ENCODE measurements at regions of chr3 and their contacts with region 1.

Region 1: DNA sequence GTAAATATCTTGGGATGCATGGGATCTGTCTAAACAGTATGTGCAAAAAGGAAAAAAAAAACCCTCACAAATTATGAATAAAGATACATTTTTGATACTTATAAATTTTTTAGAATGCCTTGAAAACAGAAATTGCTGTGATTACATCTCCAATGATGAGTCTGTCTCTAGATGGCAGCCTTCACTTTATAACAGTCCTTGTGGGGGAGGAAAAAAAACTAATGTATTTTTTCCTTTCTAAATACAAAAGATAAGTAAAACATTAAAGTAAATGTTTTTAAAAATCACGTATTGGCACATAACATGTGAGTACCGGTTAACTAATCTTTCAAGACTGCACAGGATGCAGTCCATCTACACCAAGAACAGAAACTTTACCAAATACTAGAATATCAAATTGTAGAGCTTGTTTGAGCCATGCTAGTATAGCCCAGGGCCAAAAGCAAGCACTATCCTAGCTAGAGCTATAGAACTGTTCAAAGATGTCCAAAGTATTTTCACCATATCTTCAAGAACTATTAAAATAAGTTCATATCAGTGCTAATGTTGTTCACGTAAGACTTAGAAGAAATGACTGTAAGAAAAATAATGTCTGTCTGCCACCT is 206.4 kb downstream of the STAG1 start:
- DNase-seq: no peak
- H3K4me3 ChIP-seq: no peak overlapping the region
- H3K4me3 Mint-ChIP-seq: no peak overlapping the region
- H3K27ac ChIP-seq: no peak overlapping the region
- H3K27ac Mint-ChIP-seq: peak overlapping the region in 1 of 8 donors; percentile 73
- H3K4me1 ChIP-seq: no peaks in the 10 kb centered on the region
- H3K4me1 Mint-ChIP-seq: peaks cover 28 to 50% (median 46%) of the 10 kb centered on the region in 3 donors
- H3K27me3 ChIP-seq: no peaks in the 10 kb centered on the region
- H3K27me3 Mint-ChIP-seq: no peaks in the 10 kb centered on the region

Region 2: DNA sequence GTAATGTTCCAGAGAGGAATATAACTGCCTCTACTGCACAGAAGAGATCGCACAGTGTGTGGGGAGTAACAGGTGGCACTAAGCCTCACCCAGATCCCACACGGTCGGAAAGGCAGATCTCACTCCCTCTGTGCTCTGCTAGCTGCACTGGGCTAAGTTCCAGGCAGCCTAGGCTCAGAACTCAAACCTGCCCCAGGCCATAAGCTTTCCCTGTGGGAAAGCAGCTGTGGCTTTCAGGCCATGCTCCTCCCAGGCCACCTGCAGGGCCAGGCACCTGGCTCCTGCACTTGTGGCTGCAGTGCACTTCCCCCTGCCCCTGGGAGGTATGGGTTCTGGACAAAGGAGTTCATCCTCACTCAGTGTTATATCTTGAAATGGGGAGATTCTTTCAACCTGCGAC is 268.1 kb before region 1 on chr3:
- CTCF ChIA-PET with region 1: no interaction called
- POLR2A ChIA-PET with region 1: interaction called, 13 read pairs
- DNase-seq: no peak
- H3K4me3 ChIP-seq: no peak overlapping the region
- H3K4me3 Mint-ChIP-seq: no peak overlapping the region
- H3K27ac ChIP-seq: no peak overlapping the region
- H3K27ac Mint-ChIP-seq: no peak overlapping the region
- H3K4me1 ChIP-seq: no peaks in the 10 kb centered on the region
- H3K4me1 Mint-ChIP-seq: peaks cover 10 to 40% (median 20%) of the 10 kb centered on the region in 3 donors
- H3K27me3 ChIP-seq: no peaks in the 10 kb centered on the region
- H3K27me3 Mint-ChIP-seq: no peaks in the 10 kb centered on the region

Region 3: DNA sequence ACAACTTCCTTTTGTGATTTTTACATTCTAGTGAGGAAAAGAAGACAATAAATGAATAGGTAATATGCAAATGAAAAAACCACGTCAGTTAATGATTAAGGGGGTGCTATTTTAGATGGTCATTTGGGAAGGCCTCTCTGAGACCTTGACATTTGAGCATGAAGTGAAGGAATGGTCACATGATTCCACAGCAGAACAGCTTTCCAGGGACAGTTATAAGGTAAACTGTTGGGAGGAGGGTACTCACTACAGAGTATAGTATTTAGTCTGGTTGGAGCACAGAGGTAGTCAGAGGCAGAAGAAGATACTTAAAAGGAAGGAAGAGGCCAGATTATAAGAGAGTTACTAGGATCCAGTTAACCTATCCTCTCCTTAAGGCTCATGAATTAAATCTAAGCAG is 40.1 kb before region 1 on chr3:
- CTCF ChIA-PET with region 1: no interaction called
- POLR2A ChIA-PET with region 1: no interaction called
- DNase-seq: no peak
- H3K4me3 ChIP-seq: no peak overlapping the region
- H3K4me3 Mint-ChIP-seq: no peak overlapping the region
- H3K27ac ChIP-seq: no peak overlapping the region
- H3K27ac Mint-ChIP-seq: peak overlapping the region in 3 of 8 donors; percentile 1 to 54 (median 48)
- H3K4me1 ChIP-seq: no peaks in the 10 kb centered on the region
- H3K4me1 Mint-ChIP-seq: peaks cover 0 to 8% (median 6%) of the 10 kb centered on the region in 3 donors
- H3K27me3 ChIP-seq: no peaks in the 10 kb centered on the region
- H3K27me3 Mint-ChIP-seq: no peaks in the 10 kb centered on the region

Region 4: DNA sequence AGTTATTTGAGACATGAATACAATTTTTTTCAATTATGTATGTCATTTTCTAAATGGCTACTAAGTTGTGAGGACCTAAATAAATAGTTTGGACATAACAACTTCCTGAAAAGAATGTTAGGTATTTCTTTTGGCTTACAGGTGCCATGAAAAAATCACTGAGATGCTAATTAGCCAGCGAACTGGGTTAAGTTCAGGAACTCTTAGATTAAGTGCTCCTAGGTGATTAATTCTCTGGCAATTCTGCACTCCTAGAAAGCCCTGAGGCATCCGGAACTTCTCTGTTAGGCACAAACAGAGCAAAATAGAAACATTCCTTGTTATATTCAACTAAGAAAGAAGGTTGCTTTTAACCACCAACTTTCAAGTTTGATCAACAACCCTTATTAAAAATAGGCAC is 14.1 kb after region 1 on chr3:
- CTCF ChIA-PET with region 1: no interaction called
- POLR2A ChIA-PET with region 1: no interaction called
- DNase-seq: no peak
- H3K4me3 ChIP-seq: no peak overlapping the region
- H3K4me3 Mint-ChIP-seq: no peak overlapping the region
- H3K27ac ChIP-seq: no peak overlapping the region
- H3K27ac Mint-ChIP-seq: no peak overlapping the region
- H3K4me1 ChIP-seq: no peaks in the 10 kb centered on the region
- H3K4me1 Mint-ChIP-seq: peaks cover 9 to 30% (median 18%) of the 10 kb centered on the region in 3 donors
- H3K27me3 ChIP-seq: no peaks in the 10 kb centered on the region
- H3K27me3 Mint-ChIP-seq: no peaks in the 10 kb centered on the region

Region 5: DNA sequence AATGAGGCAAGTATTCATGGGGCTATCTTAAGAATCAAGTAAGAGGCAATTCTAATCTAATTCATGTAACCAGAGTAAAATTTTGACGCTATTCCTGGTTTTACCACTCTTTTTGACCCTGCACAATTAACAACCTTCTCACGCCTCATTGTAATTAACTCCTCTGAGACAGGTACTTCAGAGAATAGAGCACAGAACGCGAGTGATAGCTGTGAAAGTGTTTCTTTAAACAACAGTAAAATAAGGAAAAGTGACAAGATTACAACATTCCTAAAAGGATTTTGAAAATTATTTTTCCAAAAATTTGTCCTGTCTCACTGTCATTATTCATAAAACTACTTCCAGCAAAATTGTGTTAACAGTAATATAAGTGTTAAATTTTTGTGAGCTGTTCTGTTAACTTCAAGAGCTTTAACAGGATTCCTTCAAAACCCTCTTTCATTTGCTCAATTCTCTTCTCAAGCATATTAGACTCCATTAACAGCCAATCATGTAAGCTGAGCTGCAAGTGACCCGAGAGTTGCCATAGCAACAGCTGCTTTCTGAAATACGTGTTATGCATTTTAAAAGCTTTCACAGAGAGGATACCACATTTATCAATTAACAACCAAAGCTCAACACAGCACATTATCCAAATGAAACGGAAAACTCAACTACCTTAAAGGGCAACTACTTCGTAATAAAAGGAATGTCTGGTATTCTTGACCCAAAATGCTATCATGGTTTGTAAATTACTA is 113.3 kb after region 1 on chr3:
- CTCF ChIA-PET with region 1: no interaction called
- POLR2A ChIA-PET with region 1: no interaction called
- DNase-seq: no peak
- H3K4me3 ChIP-seq: no peak overlapping the region
- H3K4me3 Mint-ChIP-seq: no peak overlapping the region
- H3K27ac ChIP-seq: no peak overlapping the region
- H3K27ac Mint-ChIP-seq: peak overlapping the region in 1 of 8 donors; percentile 17
- H3K4me1 ChIP-seq: peaks cover 5% of the 10 kb centered on the region
- H3K4me1 Mint-ChIP-seq: peaks cover 26 to 54% (median 52%) of the 10 kb centered on the region in 3 donors
- H3K27me3 ChIP-seq: no peaks in the 10 kb centered on the region
- H3K27me3 Mint-ChIP-seq: no peaks in the 10 kb centered on the region

Measured in CD8-positive, alpha-beta memory T cell (primary cell).